ENCODE measurements at regions of chr7 and their contacts with region 1.

Region 1: GRCh38 chr7:25922296-25922695 is 229.7 kb upstream of the NFE2L3 start:
- DNase-seq: no peak
- ATAC-seq: no peak

Region 2: GRCh38 chr7:25881317-25882037 is 40.8 kb before region 1 on chr7:
- intact Hi-C with region 1: loop called (anchors 2 kb)
- DNase-seq: no peak
- ATAC-seq: no peak